ENCODE measurements at regions of chr4 and their contacts with region 1.

Region 1: GRCh38 chr4:76087007-76087769 is 12.7 kb downstream of the ART3 start:
- DNase-seq: peak; percentile 56
- ATAC-seq: peak; percentile 99
- H3K4me3 Mint-ChIP-seq: peak overlapping the region; percentile 42
- H3K27ac Mint-ChIP-seq: no peak overlapping the region
- H3K4me1 Mint-ChIP-seq: peaks cover 6% of the 10 kb centered on the region
- H3K27me3 Mint-ChIP-seq: no peaks in the 10 kb centered on the region
- CTCF ChIP-seq: no peak

Region 2: GRCh38 chr4:75940692-75941253 is 146.4 kb before region 1 on chr4 and contains the start of gene NAAA:
- CTCF ChIA-PET with region 1: interaction called, 13 read pairs
- POLR2A ChIA-PET with region 1: interaction called, 3 read pairs
- DNase-seq: peak; percentile 81
- ATAC-seq: peak; percentile 77
- H3K4me3 Mint-ChIP-seq: peak within 1 kb of the TSS; percentile 92
- H3K27ac Mint-ChIP-seq: no peak within 1 kb of the TSS
- H3K4me1 Mint-ChIP-seq: peaks cover 22% of the 10 kb centered on the region
- H3K27me3 Mint-ChIP-seq: peaks cover 16% of the 10 kb centered on the region; the same call in 1 of the 2 replicates
- CTCF ChIP-seq: no peak
- total RNA-seq, gene NAAA: 7.1 to 9.0 TPM (median 8.2 TPM) in 3 replicates

Region 3: GRCh38 chr4:76055016-76055415 is 32.2 kb before region 1 on chr4:
- CTCF ChIA-PET with region 1: interaction called, 13 read pairs
- POLR2A ChIA-PET with region 1: no interaction called
- DNase-seq: no peak
- ATAC-seq: no peak
- H3K4me3 Mint-ChIP-seq: no peak overlapping the region
- H3K27ac Mint-ChIP-seq: no peak overlapping the region
- H3K4me1 Mint-ChIP-seq: peaks cover 28% of the 10 kb centered on the region
- H3K27me3 Mint-ChIP-seq: peaks cover 2% of the 10 kb centered on the region
- CTCF ChIP-seq: no peak

Region 4: GRCh38 chr4:76246025-76246424 is 158.8 kb after region 1 on chr4:
- CTCF ChIA-PET with region 1: no interaction called
- POLR2A ChIA-PET with region 1: no interaction called
- DNase-seq: no peak
- ATAC-seq: no peak
- H3K4me3 Mint-ChIP-seq: no peak overlapping the region
- H3K27ac Mint-ChIP-seq: no peak overlapping the region
- H3K4me1 Mint-ChIP-seq: peaks cover 9% of the 10 kb centered on the region
- H3K27me3 Mint-ChIP-seq: peaks cover 20% of the 10 kb centered on the region
- CTCF ChIP-seq: no peak

Measured in WTC11 (cell line).